Right lobe of liver (tissue), 6 donors: ENCODE measurements at regions of chr19 and their contacts with region 1.

Region 1: GRCh38 chr19:49136771-49137171 is 17.4 kb downstream of the PPFIA3 start:
- DNase-seq: no peak
- ATAC-seq: no peak
- H3K4me3 ChIP-seq: no peak overlapping the region
- H3K27ac ChIP-seq: no peak overlapping the region
- H3K4me1 ChIP-seq: peaks cover 0 to 6% (median 0%) of the 10 kb centered on the region in 4 donors
- H3K27me3 ChIP-seq: no peaks in the 10 kb centered on the region
- CTCF ChIP-seq: no peak
- POLR2A ChIP-seq: no peak

Region 2: GRCh38 chr19:48899781-48900476 is 236.8 kb before region 1 on chr19 and contains the start of gene NUCB1:
- intact Hi-C with region 1: no loop called
- DNase-seq: peak; percentile 99
- ATAC-seq: peak; percentile 96 to 99 (median 98)
- H3K4me3 ChIP-seq: peak within 1 kb of the TSS; percentile 69 to 98 (median 76)
- H3K27ac ChIP-seq: peak within 1 kb of the TSS; percentile 95 to 97 (median 96)
- H3K4me1 ChIP-seq: peaks cover 0 to 20% (median 11%) of the 10 kb centered on the region in 4 donors
- H3K27me3 ChIP-seq: no peaks in the 10 kb centered on the region
- CTCF ChIP-seq: peak; percentile 18 to 38 (median 31)
- POLR2A ChIP-seq: peak; percentile 77
- total RNA-seq, gene NUCB1: 306 to 376 (median 349) TPM

Region 3: GRCh38 chr19:49042177-49042576 is 94.6 kb before region 1 on chr19:
- intact Hi-C with region 1: no loop called
- DNase-seq: no peak
- ATAC-seq: no peak
- H3K4me3 ChIP-seq: no peak overlapping the region
- H3K27ac ChIP-seq: no peak overlapping the region
- H3K4me1 ChIP-seq: no peaks in the 10 kb centered on the region
- H3K27me3 ChIP-seq: no peaks in the 10 kb centered on the region
- CTCF ChIP-seq: no peak
- POLR2A ChIP-seq: no peak

Region 4: DNA sequence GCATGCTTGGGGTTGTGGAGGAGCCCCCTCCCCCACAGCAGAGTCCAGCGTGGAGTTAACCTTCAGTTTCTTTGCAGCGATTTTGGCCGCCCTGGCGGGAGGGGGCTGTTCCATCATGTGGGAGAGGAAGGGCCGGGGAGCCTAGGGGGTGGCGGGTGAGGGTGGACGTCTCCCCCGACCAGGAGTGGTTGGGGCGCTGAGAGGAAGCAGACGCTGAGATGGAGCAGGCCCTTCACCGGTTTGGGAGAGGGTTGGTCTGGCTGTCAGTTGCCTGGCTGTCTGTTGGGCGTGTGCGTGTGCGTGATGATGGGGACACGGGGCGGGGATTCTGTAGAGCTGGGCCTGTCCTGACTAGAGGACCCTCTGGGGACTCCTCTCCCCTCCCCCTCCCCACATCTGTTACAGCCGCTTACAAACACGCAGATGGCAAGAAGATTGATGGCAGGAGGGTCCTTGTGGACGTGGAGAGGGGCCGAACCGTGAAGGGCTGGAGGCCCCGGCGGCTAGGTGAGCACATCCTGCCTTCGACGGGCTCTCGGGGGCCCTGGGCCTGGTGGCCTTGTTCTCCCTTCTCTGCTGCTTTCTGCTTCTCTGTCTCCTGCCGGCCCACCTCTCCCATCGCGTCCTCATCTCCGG is 32.4 kb before region 1 on chr19:
- intact Hi-C with region 1: loop called in 1 of 2 experiments (anchors 5 kb)
- DNase-seq: no peak
- ATAC-seq: no peak
- H3K4me3 ChIP-seq: no peak overlapping the region
- H3K27ac ChIP-seq: no peak overlapping the region
- H3K4me1 ChIP-seq: peaks cover 0 to under 1% (median 0%) of the 10 kb centered on the region in 4 donors
- H3K27me3 ChIP-seq: no peaks in the 10 kb centered on the region
- CTCF ChIP-seq: no peak
- POLR2A ChIP-seq: no peak

Region 5: GRCh38 chr19:49421039-49421877 is 284.5 kb after region 1 on chr19:
- intact Hi-C with region 1: no loop called
- DNase-seq: peak in 2 of 3 donors; percentile 58 to 60
- ATAC-seq: peak; percentile 51 to 77 (median 69)
- H3K4me3 ChIP-seq: no peak overlapping the region
- H3K27ac ChIP-seq: no peak overlapping the region
- H3K4me1 ChIP-seq: peaks cover 0 to 7% (median 0%) of the 10 kb centered on the region in 4 donors
- H3K27me3 ChIP-seq: peaks cover 9 to 23% of the 10 kb centered on the region in 2 donors
- CTCF ChIP-seq: no peak
- POLR2A ChIP-seq: no peak

Region 6: DNA sequence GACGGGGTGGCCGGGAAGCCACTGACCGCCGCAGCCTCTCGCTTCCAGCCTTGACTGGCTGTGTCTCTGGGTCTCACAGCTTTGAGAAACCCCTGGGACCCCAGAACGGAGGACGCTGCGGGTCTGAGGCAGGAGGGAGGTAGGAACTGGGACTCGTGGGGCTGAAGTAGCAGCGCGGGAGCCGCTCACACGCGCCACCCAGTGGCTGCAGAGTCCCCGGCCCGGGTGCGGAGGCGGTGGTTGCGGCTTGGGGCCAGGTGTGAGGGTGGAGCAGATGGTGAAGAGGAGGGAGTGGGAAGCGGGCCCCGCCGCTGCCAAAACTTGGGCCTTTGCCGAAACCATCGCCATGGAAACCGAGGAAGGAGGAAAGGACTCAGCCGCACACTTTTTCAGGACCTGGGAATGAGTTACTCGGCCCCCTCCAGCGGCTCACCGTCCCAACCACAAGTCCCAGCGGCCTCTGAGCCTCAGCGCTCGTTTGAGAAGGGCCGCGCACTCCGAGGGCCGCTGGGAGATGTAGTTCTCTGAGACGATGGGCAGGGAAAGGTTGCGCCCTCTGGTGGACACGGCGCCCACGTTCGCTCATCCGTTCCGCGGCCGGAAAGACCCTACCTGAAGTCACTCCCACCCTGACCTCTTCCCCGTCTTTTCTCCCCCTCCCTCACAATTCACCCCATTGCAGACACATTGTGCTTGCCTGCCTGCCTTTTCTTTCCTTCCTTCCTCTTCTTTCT is 306.8 kb after region 1 on chr19:
- intact Hi-C with region 1: no loop called
- DNase-seq: peak; percentile 94
- ATAC-seq: peak; percentile 79 to 93 (median 88)
- H3K4me3 ChIP-seq: peak overlapping the region; percentile 70 to 80 (median 76)
- H3K27ac ChIP-seq: peak overlapping the region; percentile 2 to 40 (median 35)
- H3K4me1 ChIP-seq: no peaks in the 10 kb centered on the region
- H3K27me3 ChIP-seq: no peaks in the 10 kb centered on the region
- CTCF ChIP-seq: peak; percentile 73 to 83 (median 77)
- POLR2A ChIP-seq: peak; percentile 13